ENCODE measurements at regions of chr5 and their contacts with region 1.

Region 1: DNA sequence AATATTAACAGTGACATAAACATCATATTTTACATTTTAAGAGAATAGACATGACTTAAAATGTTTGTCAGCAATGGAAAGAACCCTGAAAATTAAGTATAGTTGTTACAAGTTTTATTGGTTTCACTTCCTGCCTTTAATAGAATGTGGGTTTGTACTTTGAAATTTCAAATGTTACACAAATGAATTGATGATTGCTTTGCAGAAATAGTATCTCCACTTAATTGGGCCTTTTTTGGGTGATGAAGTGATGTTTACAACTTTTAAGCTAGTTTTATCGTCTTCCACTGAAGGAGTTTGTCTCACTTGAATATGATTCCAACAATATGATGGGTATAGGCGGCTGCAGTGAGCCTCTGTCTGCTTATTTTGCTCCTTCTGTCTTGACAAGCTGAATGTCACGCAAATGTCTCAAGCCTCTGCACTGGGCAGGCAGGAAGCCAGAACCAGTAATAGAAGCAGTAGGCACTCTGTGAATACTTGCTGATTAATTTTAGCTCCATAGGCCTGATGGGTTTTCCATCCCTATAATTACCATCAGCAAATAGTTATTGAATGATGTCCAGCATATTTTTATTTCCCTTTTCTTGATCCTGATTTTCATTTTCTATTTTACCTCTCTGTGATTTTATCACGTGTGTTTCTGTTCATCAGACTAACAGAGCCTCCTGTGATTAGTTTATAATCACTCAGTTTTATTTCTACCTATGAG is 10.6 kb upstream of the NR3C1 start:
- DNase-seq: peak; percentile 20
- H3K4me3 ChIP-seq: no peak overlapping the region
- H3K27ac ChIP-seq: peak overlapping the region; percentile 48
- H3K4me1 ChIP-seq: peaks cover 17% of the 10 kb centered on the region
- H3K27me3 ChIP-seq: no peaks in the 10 kb centered on the region
- CTCF ChIP-seq: no peak

Region 2: GRCh38 chr5:143355720-143356119 is 58.4 kb before region 1 on chr5:
- intact Hi-C with region 1: no loop called
- DNase-seq: peak; percentile 33
- H3K4me3 ChIP-seq: no peak overlapping the region
- H3K27ac ChIP-seq: peak overlapping the region; percentile 24
- H3K4me1 ChIP-seq: peaks cover 91% of the 10 kb centered on the region
- H3K27me3 ChIP-seq: no peaks in the 10 kb centered on the region
- CTCF ChIP-seq: no peak

Region 3: GRCh38 chr5:143968011-143968878 is 554.1 kb after region 1 on chr5:
- intact Hi-C with region 1: loop called (anchors 10 kb)
- DNase-seq: no peak
- H3K4me3 ChIP-seq: no peak overlapping the region
- H3K27ac ChIP-seq: no peak overlapping the region
- H3K4me1 ChIP-seq: no peaks in the 10 kb centered on the region
- H3K27me3 ChIP-seq: no peaks in the 10 kb centered on the region
- CTCF ChIP-seq: peak; percentile 58

Region 4: DNA sequence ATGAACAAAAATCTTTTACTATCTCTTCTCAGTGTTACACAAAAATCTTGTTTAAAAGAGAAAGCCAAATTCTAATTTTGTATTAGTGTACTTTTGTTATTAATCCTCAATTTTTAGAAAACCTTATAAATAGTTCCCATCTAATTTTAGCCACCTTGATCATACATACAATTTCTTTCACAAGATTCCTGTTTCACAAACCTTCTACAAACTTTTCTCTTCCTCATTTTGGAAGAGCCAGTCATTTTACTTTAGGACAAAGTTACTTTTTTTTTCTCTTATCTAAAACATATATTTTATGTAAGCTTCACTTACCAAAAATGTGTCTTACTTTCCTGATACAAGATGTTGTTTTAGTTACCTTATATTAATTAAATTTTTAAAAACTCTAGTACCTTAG is 595.0 kb after region 1 on chr5:
- intact Hi-C with region 1: no loop called
- DNase-seq: no peak
- H3K4me3 ChIP-seq: no peak overlapping the region
- H3K27ac ChIP-seq: no peak overlapping the region
- H3K4me1 ChIP-seq: peaks cover 2% of the 10 kb centered on the region
- H3K27me3 ChIP-seq: no peaks in the 10 kb centered on the region
- CTCF ChIP-seq: no peak

Measured in left ventricle myocardium inferior (tissue), 1 donor.